ENCODE measurements at regions of chr21 and their contacts with region 1.

Region 1: DNA sequence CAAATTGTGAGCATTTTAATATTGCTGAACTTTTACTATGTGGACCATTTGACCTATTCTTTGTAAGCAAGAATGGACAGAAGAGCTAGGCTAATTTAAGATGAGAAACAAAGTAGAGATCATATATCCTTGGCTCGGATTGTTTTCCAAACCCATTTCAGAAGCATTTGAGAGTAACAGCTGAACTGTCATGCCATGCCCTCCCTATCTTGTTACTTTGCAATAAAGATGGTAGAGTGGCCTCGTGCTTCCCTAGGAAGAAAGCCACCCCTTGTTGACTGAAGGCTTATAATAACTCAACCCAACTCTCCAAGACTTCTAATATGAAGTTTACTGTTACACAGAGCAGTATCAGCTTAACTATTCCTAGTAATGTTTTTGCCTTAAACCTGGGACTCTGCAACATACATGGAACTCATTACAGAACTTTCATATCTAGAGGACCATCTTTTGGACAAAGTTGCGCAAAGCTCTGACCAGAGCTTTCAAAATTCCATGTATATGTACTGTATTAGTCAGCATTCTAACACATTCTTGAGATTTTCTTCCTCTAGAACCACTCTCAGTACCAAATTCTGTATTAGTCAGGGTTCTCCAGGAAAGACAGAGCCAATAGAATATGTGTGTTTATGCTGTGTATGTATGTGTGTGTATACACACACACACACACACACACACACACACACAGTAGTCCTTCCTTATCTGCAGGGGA is 68.7 kb downstream of the ADAMTS1 start:
- DNase-seq: no peak
- ATAC-seq: no peak
- H3K4me3 ChIP-seq: no peak overlapping the region
- H3K27ac ChIP-seq: no peak overlapping the region
- H3K4me1 ChIP-seq: no peaks in the 10 kb centered on the region
- H3K27me3 ChIP-seq: no peaks in the 10 kb centered on the region
- CTCF ChIP-seq: no peak

Region 2: DNA sequence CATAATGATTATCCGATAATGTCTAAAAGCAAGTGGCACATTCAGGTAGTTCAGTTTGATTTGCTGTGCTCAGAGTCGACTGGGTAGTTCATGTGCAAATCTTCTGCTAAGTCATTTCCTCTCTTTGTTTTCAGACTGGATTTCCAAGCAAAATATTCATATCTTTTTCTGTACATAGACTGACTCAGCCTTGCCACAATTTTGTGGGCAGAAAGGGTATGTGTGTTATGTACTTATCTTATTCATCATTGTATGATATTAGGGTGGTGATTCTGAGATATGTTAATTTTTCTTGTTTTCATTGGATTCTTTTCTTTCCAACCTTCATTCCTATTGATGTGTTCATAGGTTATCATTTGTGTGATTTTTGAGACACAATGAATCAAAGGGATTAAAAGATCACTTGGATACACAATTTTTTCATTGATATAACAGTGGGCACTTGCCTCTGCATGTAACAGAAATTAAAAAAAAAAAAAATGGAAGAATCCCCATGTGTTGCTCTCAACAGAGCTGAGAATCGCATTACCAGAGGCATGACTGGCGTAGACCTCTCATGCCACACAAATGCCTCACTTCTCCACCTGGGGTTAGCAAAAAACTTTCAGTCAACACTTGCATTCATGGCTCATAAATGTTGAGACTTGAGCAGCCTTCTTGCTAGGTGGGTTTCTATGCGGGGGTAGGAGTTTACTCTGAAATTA is 1860.7 kb after region 1 on chr21:
- intact Hi-C with region 1: loop called (anchors 5 kb)
- DNase-seq: no peak
- ATAC-seq: no peak
- H3K4me3 ChIP-seq: no peak overlapping the region
- H3K27ac ChIP-seq: no peak overlapping the region
- H3K4me1 ChIP-seq: peaks cover 20% of the 10 kb centered on the region
- H3K27me3 ChIP-seq: no peaks in the 10 kb centered on the region
- CTCF ChIP-seq: no peak

Measured in upper lobe of right lung (tissue), 1 donor.